Posterior cingulate gyrus (tissue), 11 donors: ENCODE measurements at regions of chr20 and their contacts with region 1.

Region 1: DNA sequence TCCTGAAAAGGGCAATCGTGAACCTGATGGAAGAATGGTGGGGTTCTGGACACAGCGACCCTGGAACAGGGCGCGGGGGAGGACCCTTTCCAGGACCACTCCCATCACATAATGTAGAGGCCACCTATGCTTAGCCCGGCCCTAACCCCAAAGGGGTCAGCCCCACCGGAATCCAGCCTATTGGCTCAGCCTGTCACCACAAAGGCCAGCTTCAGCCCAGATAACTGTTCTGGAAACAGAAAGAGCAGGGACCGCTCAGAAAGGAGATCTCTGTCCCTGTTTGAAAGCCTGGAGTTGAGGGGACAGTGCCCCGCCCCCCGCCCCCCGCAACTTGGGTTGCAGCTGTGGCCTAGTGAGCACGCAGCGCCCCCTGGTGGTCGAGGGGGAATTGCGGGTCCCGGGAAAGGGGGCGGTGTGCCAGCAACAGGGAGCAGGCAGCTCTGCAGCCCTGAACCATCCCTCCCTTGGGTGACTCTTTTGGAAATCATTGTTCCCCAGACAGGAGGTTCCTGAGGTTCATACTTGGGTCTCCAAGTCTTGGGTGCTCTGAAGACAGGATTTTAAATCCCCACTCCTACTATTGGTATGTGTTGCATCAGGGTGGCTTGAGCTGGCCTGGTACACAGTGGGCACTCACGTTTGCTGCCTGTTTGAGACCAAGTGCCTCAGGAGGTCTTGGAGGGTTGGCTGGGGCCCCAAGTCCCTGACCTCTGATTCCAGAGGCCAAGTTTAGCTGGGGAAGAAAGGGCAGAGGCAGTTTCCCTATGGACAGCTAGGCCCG is 1.5 kb downstream of the SIGLEC1 start:
- DNase-seq: peak; percentile 41 to 95 (median 79)

Region 2: GRCh38 chr20:3543901-3544507 is 166.9 kb before region 1 on chr20:
- intact Hi-C with region 1: no loop called
- DNase-seq: no peak

Region 3: DNA sequence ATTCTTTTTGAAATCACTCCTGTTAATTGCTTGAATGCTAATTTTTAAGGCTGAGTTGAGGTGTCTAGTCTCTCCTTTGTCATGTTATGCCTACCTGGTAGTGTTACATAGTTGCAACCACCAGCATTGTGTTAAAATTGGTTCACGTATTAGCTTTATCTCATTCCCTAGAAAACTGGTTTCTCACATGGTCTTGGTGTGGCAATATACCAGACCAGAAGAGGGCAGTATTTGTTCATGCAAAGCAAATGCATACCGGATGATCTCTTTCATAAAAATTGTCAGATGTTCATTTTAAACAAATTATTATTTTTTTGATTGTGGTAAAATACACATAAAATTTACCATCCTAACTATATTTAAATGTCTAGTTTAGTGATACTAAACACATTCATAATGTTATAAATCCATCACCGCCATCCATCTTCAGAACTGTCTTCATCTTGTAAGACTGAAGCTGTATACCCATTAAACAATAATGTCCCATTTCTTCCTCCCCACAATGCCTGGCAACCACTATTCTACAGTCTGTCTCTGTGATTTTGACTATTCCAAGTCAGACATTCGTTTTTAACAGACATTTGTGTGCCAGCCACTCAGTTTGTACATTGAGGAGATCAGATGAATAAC is 147.2 kb before region 1 on chr20:
- intact Hi-C with region 1: loop called (anchors 1 kb)
- DNase-seq: no peak

Region 4: GRCh38 chr20:3679749-3680700 is 30.9 kb before region 1 on chr20:
- intact Hi-C with region 1: loop called (anchors 1 kb)
- DNase-seq: peak in 1 of 10 donors; percentile 72

Region 5: GRCh38 chr20:3836132-3836531 is 125.2 kb after region 1 on chr20:
- intact Hi-C with region 1: no loop called
- DNase-seq: no peak